ENCODE measurements at regions of chrX and their contacts with region 1.

Region 1: GRCh38 chrX:39242187-39242586 is 440.9 kb downstream of the MID1IP1 start:
- H3K4me3 Mint-ChIP-seq: no peak overlapping the region
- H3K27ac Mint-ChIP-seq: no peak overlapping the region
- H3K4me1 Mint-ChIP-seq: no peaks in the 10 kb centered on the region
- H3K27me3 Mint-ChIP-seq: no peaks in the 10 kb centered on the region

Region 2: GRCh38 chrX:38754102-38754790 is 487.9 kb before region 1 on chrX:
- intact Hi-C with region 1: loop called (anchors 5 kb)
- H3K4me3 Mint-ChIP-seq: no peak overlapping the region
- H3K27ac Mint-ChIP-seq: no peak overlapping the region
- H3K4me1 Mint-ChIP-seq: peaks cover 8% of the 10 kb centered on the region
- H3K27me3 Mint-ChIP-seq: no peaks in the 10 kb centered on the region

Region 3: GRCh38 chrX:39162322-39162735 is 79.9 kb before region 1 on chrX:
- intact Hi-C with region 1: loop called (anchors 10 kb)
- H3K4me3 Mint-ChIP-seq: peak overlapping the region; percentile 53
- H3K27ac Mint-ChIP-seq: no peak overlapping the region
- H3K4me1 Mint-ChIP-seq: peaks cover 51% of the 10 kb centered on the region
- H3K27me3 Mint-ChIP-seq: peaks cover 31% of the 10 kb centered on the region

Measured in dendritic cell treated with granulocyte-macrophage colony-stimulating factor and Interleukin-4, amounts not matched to agents 40 ng/mL and 50 ng/mL, for 4 days (primary cell).